ENCODE measurements at regions of chr11 and their contacts with region 1.

Region 1: DNA sequence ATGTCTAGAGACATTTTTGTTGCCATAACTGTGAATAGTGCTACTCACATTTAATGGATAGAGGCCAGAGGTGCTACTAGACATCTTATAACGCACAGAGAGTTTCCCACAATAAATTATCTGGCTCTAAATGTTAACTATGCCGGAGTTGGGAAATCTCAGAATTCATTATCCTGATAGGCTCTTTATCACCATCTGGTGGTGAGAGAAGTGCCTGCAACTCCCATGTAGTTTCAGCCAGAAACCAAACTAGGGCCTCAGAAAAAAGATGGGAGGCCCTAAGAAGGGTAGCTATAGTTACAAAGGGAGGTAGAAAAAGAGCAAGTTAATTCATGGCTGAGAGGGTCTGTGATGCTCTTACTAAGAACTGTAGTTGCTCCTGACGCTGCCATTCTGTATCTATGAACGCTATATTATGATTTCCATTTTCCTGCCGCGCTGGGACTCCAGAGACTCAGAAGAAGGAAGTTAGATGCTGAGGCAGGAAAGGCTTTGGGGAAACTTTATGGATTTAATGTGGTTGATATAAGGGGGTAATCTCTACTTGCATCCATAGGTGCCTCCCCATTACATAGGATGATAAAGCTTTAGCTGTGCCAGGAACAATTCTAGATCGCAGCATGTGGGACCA is 22.9 kb upstream of the MRPL17 start:
- DNase-seq: peak; percentile 44
- ATAC-seq: peak; percentile 68
- H3K4me3 Mint-ChIP-seq: no peak overlapping the region
- H3K27ac Mint-ChIP-seq: no peak overlapping the region
- H3K4me1 Mint-ChIP-seq: peaks cover 16% of the 10 kb centered on the region
- H3K27me3 Mint-ChIP-seq: peaks cover 8% of the 10 kb centered on the region; the same call in 1 of the 2 replicates
- CTCF ChIP-seq: peak; percentile 69

Region 2: GRCh38 chr11:6737872-6738466 is 31.9 kb after region 1 on chr11:
- CTCF ChIA-PET with region 1: interaction called, 11 read pairs
- POLR2A ChIA-PET with region 1: no interaction called
- DNase-seq: peak; percentile 28
- ATAC-seq: peak; percentile 89
- H3K4me3 Mint-ChIP-seq: no peak overlapping the region
- H3K27ac Mint-ChIP-seq: no peak overlapping the region
- H3K4me1 Mint-ChIP-seq: no peaks in the 10 kb centered on the region
- H3K27me3 Mint-ChIP-seq: no peaks in the 10 kb centered on the region; the same call in 1 of the 2 replicates
- CTCF ChIP-seq: peak; percentile 30; the same call in 1 of the 2 replicates

Measured in WTC11 (cell line).